B cell (primary cell): ENCODE measurements at regions of chr19 and their contacts with region 1.

Region 1: GRCh38 chr19:7680606-7681339 is at the start of gene TRAPPC5:
- DNase-seq: peak; percentile 93
- ATAC-seq: peak; percentile 65
- H3K4me3 ChIP-seq: peak within 1 kb of the TSS; percentile 35 to 98 (median 93)
- H3K4me3 Mint-ChIP-seq: peak within 1 kb of the TSS; percentile 87
- H3K27ac ChIP-seq: peak within 1 kb of the TSS; percentile 79 to 92
- H3K27ac Mint-ChIP-seq: peak within 1 kb of the TSS; percentile 92
- H3K4me1 ChIP-seq: peaks cover 37 to 45% of the 10 kb centered on the region in 2 donors
- H3K4me1 Mint-ChIP-seq: peaks cover 63% of the 10 kb centered on the region
- H3K27me3 ChIP-seq: peaks cover 0 to 21% (median 3%) of the 10 kb centered on the region in 4 experiments
- H3K27me3 Mint-ChIP-seq: peaks cover 15% of the 10 kb centered on the region
- CTCF ChIP-seq: peak; percentile 95
- total RNA-seq, gene TRAPPC5: 61.2 and 61.5 TPM in 2 replicates

Region 2: DNA sequence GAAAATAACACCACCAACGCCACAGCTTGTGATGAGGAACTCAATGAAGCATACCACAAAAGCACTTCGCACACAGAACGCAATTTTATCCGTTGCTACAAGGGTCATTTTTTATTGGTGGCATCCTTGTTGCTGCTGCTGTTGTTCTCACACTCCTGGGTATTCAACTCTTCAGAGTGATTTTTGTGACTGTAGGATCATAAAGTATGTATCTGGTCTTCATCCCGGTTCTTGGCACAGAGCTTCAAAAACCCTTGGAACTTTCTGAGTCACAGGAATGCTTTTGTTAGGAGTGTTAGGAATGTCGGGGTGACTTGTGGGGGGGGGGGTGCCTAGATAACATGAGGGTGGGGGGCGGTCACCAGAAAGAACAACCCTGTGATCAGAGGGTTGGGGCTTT is 502.8 kb before region 1 on chr19:
- CTCF ChIA-PET with region 1: no interaction called
- POLR2A ChIA-PET with region 1: no interaction called
- intact Hi-C with region 1: no loop called
- DNase-seq: no peak
- ATAC-seq: no peak
- H3K4me3 ChIP-seq: no peak overlapping the region
- H3K4me3 Mint-ChIP-seq: no peak overlapping the region
- H3K27ac ChIP-seq: no peak overlapping the region
- H3K27ac Mint-ChIP-seq: peak overlapping the region; percentile 46
- H3K4me1 ChIP-seq: peaks cover 26 to 33% of the 10 kb centered on the region in 2 donors
- H3K4me1 Mint-ChIP-seq: peaks cover 40% of the 10 kb centered on the region
- H3K27me3 ChIP-seq: no peaks in the 10 kb centered on the region
- H3K27me3 Mint-ChIP-seq: peaks cover 5% of the 10 kb centered on the region
- CTCF ChIP-seq: no peak

Region 3: DNA sequence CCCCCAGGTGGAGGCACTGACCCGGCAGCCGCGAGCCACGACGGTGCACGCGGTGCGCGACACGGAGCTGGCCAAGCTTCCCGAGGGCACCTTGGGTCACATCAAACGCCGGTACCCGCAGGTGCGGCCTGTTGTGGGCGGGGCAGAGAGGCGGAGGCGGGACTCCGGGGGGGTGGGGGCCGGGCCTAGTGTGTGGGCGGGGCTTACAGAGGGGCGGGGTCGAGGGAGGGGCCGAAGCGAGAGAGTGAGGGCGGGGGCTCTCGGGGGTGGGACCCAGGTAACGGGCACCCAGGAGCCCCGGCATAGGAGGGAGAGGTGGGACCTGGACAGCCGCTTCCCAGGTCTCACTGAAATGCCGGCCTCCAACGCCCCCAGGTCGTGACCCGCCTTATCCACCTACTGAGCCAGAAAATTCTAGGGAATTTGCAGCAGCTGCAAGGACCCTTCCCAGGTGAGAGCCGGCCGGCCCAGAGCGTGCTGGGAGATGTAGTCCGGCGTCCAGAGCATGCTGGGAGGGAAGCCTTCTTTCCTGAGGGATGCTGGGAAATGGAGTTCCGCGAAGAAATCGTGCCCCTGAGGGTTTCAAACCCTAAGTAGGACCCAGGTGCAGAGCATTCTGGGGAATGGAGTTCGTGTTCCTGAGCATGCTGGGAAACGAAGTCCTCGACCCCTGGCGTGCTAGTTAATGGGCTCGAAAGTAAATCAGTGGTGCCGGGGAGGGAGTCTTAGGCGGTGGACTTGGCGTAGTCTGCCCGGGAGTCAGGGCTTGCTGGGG is 129.6 kb before region 1 on chr19:
- CTCF ChIA-PET with region 1: no interaction called
- POLR2A ChIA-PET with region 1: no interaction called
- intact Hi-C with region 1: no loop called
- DNase-seq: peak; percentile 37
- ATAC-seq: peak; percentile 81
- H3K4me3 ChIP-seq: no peak overlapping the region
- H3K4me3 Mint-ChIP-seq: no peak overlapping the region
- H3K27ac ChIP-seq: no peak overlapping the region
- H3K27ac Mint-ChIP-seq: peak overlapping the region; percentile 15
- H3K4me1 ChIP-seq: peaks cover 0 to under 1% of the 10 kb centered on the region in 2 donors
- H3K4me1 Mint-ChIP-seq: peaks cover 3% of the 10 kb centered on the region
- H3K27me3 ChIP-seq: no peaks in the 10 kb centered on the region
- H3K27me3 Mint-ChIP-seq: no peaks in the 10 kb centered on the region
- CTCF ChIP-seq: no peak

Region 4: DNA sequence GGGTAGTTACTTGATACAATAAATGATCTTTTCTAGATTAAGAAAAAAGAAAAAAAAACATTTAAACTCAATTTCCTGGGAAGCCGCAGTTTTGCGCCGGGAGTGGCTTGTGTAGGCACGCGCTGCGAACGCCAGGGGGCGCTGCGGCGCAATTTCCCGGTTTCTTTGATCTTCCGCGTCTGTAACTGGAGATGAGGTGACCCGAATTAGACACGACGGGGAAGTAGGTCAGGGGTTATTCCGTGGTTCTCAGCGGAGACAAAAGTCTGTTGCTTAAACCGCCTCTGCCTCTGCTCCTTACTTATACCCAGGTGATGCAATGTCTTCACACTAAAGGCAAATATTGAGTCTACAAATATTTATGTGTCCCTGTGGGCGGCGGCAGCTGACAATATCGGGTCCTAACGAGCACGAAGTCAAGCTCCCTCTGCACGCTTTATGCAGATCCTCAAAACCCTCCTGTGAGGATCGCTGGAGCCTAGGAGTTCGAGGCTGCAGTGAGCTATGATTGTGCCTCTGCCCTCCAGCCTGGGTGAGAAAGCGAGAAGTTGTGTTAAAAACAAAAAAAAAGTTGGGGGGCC is 28.6 kb before region 1 on chr19:
- CTCF ChIA-PET with region 1: interaction called, 19 read pairs
- POLR2A ChIA-PET with region 1: interaction called, 4 read pairs
- intact Hi-C with region 1: loop called (anchors 1 kb)
- DNase-seq: peak; percentile 87
- ATAC-seq: peak; percentile 90
- H3K4me3 ChIP-seq: peak overlapping the region; percentile 32 to 74 (median 49)
- H3K4me3 Mint-ChIP-seq: peak overlapping the region; percentile 81
- H3K27ac ChIP-seq: no peak overlapping the region
- H3K27ac Mint-ChIP-seq: peak overlapping the region; percentile 70
- H3K4me1 ChIP-seq: peaks cover 0 to 6% of the 10 kb centered on the region in 2 donors
- H3K4me1 Mint-ChIP-seq: peaks cover 8% of the 10 kb centered on the region
- H3K27me3 ChIP-seq: no peaks in the 10 kb centered on the region
- H3K27me3 Mint-ChIP-seq: no peaks in the 10 kb centered on the region
- CTCF ChIP-seq: peak; percentile 98

Region 5: GRCh38 chr19:7705387-7706187 is 24.8 kb after region 1 on chr19:
- CTCF ChIA-PET with region 1: interaction called, 58 read pairs
- POLR2A ChIA-PET with region 1: interaction called, 15 read pairs
- intact Hi-C with region 1: loop called (anchors 1 kb)
- DNase-seq: peak; percentile 94
- ATAC-seq: peak; percentile 45
- H3K4me3 ChIP-seq: peak overlapping the region in 4 of 5 experiments; percentile 12 to 42 (median 21)
- H3K4me3 Mint-ChIP-seq: peak overlapping the region; percentile 87
- H3K27ac ChIP-seq: peak overlapping the region; percentile 95 to 98
- H3K27ac Mint-ChIP-seq: peak overlapping the region; percentile 100
- H3K4me1 ChIP-seq: peaks cover 90 to 97% of the 10 kb centered on the region in 2 donors
- H3K4me1 Mint-ChIP-seq: peaks cover 83% of the 10 kb centered on the region
- H3K27me3 ChIP-seq: no peaks in the 10 kb centered on the region
- H3K27me3 Mint-ChIP-seq: no peaks in the 10 kb centered on the region
- CTCF ChIP-seq: no peak

Region 6: DNA sequence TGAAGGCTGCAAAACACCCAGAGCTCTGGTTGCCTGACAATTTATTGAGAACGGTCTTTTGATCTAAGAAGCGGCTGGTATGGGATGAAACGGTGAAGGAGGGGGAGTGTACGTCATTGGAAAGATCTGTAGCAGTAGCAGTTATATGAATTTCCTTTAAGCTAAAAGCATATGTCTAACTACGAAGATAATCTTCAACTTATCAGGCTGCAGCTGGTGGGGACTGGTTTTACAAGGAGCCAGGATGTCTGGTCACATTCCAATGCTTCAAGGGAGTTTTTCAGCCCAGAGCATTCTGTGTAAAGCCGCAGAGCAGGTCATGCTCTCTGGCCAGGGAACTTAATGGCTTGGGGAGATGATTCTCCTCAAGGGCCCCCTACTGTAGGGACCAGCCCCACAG is 111.5 kb after region 1 on chr19:
- CTCF ChIA-PET with region 1: interaction called, 145 read pairs
- POLR2A ChIA-PET with region 1: no interaction called
- intact Hi-C with region 1: no loop called
- DNase-seq: no peak
- ATAC-seq: no peak
- H3K4me3 ChIP-seq: no peak overlapping the region
- H3K4me3 Mint-ChIP-seq: no peak overlapping the region
- H3K27ac ChIP-seq: no peak overlapping the region
- H3K27ac Mint-ChIP-seq: no peak overlapping the region
- H3K4me1 ChIP-seq: peaks cover 25% of the 10 kb centered on the region in 2 donors
- H3K4me1 Mint-ChIP-seq: peaks cover 23% of the 10 kb centered on the region
- H3K27me3 ChIP-seq: peaks cover 0 to 34% (median 18%) of the 10 kb centered on the region in 4 experiments
- H3K27me3 Mint-ChIP-seq: peaks cover 18% of the 10 kb centered on the region
- CTCF ChIP-seq: no peak

Region 7: GRCh38 chr19:7815325-7815724 is 134.6 kb after region 1 on chr19:
- CTCF ChIA-PET with region 1: interaction called, 10 read pairs
- POLR2A ChIA-PET with region 1: no interaction called
- intact Hi-C with region 1: no loop called
- DNase-seq: peak; percentile 71
- ATAC-seq: peak; percentile 86
- H3K4me3 ChIP-seq: peak overlapping the region in 4 of 5 experiments; percentile 1 to 55 (median 34)
- H3K4me3 Mint-ChIP-seq: peak overlapping the region; percentile 67
- H3K27ac ChIP-seq: peak overlapping the region; percentile 17 to 60
- H3K27ac Mint-ChIP-seq: peak overlapping the region; percentile 81
- H3K4me1 ChIP-seq: peaks cover 11 to 17% of the 10 kb centered on the region in 2 donors
- H3K4me1 Mint-ChIP-seq: peaks cover 26% of the 10 kb centered on the region
- H3K27me3 ChIP-seq: peaks cover 0 to 14% (median 2%) of the 10 kb centered on the region in 4 experiments
- H3K27me3 Mint-ChIP-seq: peaks cover 11% of the 10 kb centered on the region
- CTCF ChIP-seq: no peak